Right ventricle myocardium inferior (tissue), 1 donor: ENCODE measurements at regions of chr1 and their contacts with region 1.

Region 1: GRCh38 chr1:30840904-30841598 is 67.5 kb downstream of the SDC3 start:
- DNase-seq: no peak
- ATAC-seq: peak; percentile 65

Region 2: GRCh38 chr1:30809514-30810263 is 31.4 kb before region 1 on chr1:
- intact Hi-C with region 1: loop called (anchors 5 kb)
- DNase-seq: no peak
- ATAC-seq: no peak